ENCODE measurements at regions of chr10 and their contacts with region 1.

Region 1: GRCh38 chr10:25651534-25651933 is 282.5 kb upstream of the MYO3A start:
- DNase-seq: no peak
- H3K4me3 ChIP-seq: no peak overlapping the region
- H3K4me3 Mint-ChIP-seq: no peak overlapping the region
- H3K27ac Mint-ChIP-seq: no peak overlapping the region
- H3K4me1 ChIP-seq: no peaks in the 10 kb centered on the region
- H3K4me1 Mint-ChIP-seq: no peaks in the 10 kb centered on the region
- H3K27me3 ChIP-seq: no peaks in the 10 kb centered on the region
- H3K27me3 Mint-ChIP-seq: peaks cover 15% of the 10 kb centered on the region
- CTCF ChIP-seq: no peak

Region 2: GRCh38 chr10:25441270-25441669 is 210.3 kb before region 1 on chr10:
- CTCF ChIA-PET with region 1: no interaction called
- POLR2A ChIA-PET with region 1: interaction called, 10 read pairs
- intact Hi-C with region 1: no loop called
- DNase-seq: no peak
- H3K4me3 ChIP-seq: no peak overlapping the region
- H3K4me3 Mint-ChIP-seq: no peak overlapping the region
- H3K27ac Mint-ChIP-seq: no peak overlapping the region
- H3K4me1 ChIP-seq: no peaks in the 10 kb centered on the region
- H3K4me1 Mint-ChIP-seq: no peaks in the 10 kb centered on the region
- H3K27me3 ChIP-seq: no peaks in the 10 kb centered on the region
- H3K27me3 Mint-ChIP-seq: peaks cover 24% of the 10 kb centered on the region
- CTCF ChIP-seq: no peak

Region 3: DNA sequence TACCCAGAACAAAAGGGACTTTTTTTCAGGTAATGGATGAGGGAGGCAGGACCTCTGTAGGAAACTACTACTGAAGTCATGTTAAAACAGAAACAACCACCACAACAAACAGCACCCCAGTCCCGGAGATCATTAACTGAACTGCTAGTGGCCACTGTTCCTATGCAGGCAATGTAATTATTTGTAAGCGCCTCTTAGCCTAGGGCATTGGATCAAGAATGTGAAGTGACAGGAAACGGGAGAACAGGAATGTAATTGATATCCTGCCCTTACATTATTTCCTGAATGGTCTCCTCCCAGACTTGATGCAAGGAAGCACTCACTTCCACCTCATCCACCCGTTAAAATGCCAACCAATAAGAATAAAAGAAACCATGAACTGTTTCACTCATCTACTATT is 548.3 kb after region 1 on chr10:
- CTCF ChIA-PET with region 1: no interaction called
- POLR2A ChIA-PET with region 1: no interaction called
- intact Hi-C with region 1: no loop called
- DNase-seq: no peak
- H3K4me3 ChIP-seq: no peak overlapping the region
- H3K4me3 Mint-ChIP-seq: no peak overlapping the region
- H3K27ac Mint-ChIP-seq: no peak overlapping the region
- H3K4me1 ChIP-seq: no peaks in the 10 kb centered on the region
- H3K4me1 Mint-ChIP-seq: no peaks in the 10 kb centered on the region
- H3K27me3 ChIP-seq: no peaks in the 10 kb centered on the region
- H3K27me3 Mint-ChIP-seq: peaks cover 5% of the 10 kb centered on the region
- CTCF ChIP-seq: no peak

Region 4: GRCh38 chr10:27099916-27100812 is 1448.6 kb after region 1 on chr10 and contains the start of gene ANKRD26:
- CTCF ChIA-PET with region 1: no interaction called
- POLR2A ChIA-PET with region 1: no interaction called
- intact Hi-C with region 1: no loop called
- DNase-seq: peak; percentile 98 to 99
- H3K4me3 ChIP-seq: peak within 1 kb of the TSS; percentile 71
- H3K4me3 Mint-ChIP-seq: peak within 1 kb of the TSS; percentile 84
- H3K27ac Mint-ChIP-seq: peak within 1 kb of the TSS; percentile 89
- H3K4me1 ChIP-seq: no peaks in the 10 kb centered on the region; the same call in 1 of the 2 replicates
- H3K4me1 Mint-ChIP-seq: peaks cover 7% of the 10 kb centered on the region
- H3K27me3 ChIP-seq: no peaks in the 10 kb centered on the region
- H3K27me3 Mint-ChIP-seq: peaks cover 2% of the 10 kb centered on the region
- CTCF ChIP-seq: no peak
- total RNA-seq, gene ANKRD26: 16.2 and 17.5 TPM in 2 replicates